Activated CD4-positive, alpha-beta T cell treated with anti-CD3 and anti-CD28 coated beads for 36 hours (primary cell): ENCODE measurements at regions of chr1 and their contacts with region 1.

Region 1: GRCh38 chr1:156583821-156584622 is 4.5 kb downstream of the TTC24 start:
- DNase-seq: peak; percentile 88
- ATAC-seq: peak; percentile 43
- H3K4me3 Mint-ChIP-seq: peak overlapping the region; percentile 74
- H3K27ac Mint-ChIP-seq: peak overlapping the region; percentile 51
- H3K4me1 Mint-ChIP-seq: peaks cover 27% of the 10 kb centered on the region
- H3K27me3 Mint-ChIP-seq: no peaks in the 10 kb centered on the region

Region 2: DNA sequence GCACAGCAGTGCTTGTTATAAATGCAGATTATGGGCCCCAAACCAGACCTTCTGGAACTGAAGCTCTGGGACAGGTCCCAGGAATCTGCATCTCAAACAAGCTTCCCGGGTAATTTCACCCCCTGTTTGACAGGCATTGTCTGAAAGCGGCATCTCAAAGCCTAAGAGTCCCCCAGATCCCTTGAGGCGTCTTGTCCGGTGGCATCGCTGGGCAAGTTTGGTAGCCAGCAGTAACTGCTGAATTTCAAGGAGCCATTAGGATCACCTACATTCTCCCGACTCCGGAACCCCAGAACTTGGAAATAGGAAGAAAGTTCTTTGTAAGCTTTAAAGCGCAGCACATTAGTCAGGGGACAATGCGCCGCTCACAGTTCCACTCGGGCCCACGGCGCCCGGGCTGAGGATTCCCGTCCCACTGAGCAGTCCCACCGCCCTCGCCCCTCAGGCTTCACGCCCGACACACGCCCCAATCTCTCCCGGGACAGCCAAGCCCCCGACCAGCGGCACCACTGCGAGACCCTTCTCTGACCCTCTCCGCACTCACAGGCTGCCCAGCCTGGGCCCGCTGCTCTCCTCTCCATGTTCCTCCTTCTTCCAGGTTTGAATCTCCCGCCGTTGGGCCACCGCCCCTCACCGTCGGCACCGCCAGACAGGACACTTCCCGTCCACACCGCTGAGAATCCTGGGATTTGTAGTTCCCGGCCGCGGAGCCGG is 11.9 kb before region 1 on chr1 and contains the start of gene IQGAP3:
- CTCF ChIA-PET with region 1: interaction called, 19 read pairs
- POLR2A ChIA-PET with region 1: no interaction called
- intact Hi-C with region 1: no loop called
- DNase-seq: peak; percentile 87
- ATAC-seq: peak; percentile 96
- H3K4me3 Mint-ChIP-seq: peak within 1 kb of the TSS; percentile 89
- H3K27ac Mint-ChIP-seq: peak within 1 kb of the TSS; percentile 73
- H3K4me1 Mint-ChIP-seq: peaks cover 22% of the 10 kb centered on the region
- H3K27me3 Mint-ChIP-seq: peaks cover 32% of the 10 kb centered on the region
- total RNA-seq, gene IQGAP3: 14.9 to 16.0 TPM

Region 3: GRCh38 chr1:156601122-156601830 is 17.3 kb after region 1 on chr1 and contains the start of gene GPATCH4:
- CTCF ChIA-PET with region 1: interaction called, 10 read pairs
- POLR2A ChIA-PET with region 1: no interaction called
- intact Hi-C with region 1: no loop called
- DNase-seq: peak; percentile 89
- ATAC-seq: peak; percentile 76
- H3K4me3 Mint-ChIP-seq: peak within 1 kb of the TSS; percentile 97
- H3K27ac Mint-ChIP-seq: peak within 1 kb of the TSS; percentile 99
- H3K4me1 Mint-ChIP-seq: peaks cover 45% of the 10 kb centered on the region
- H3K27me3 Mint-ChIP-seq: no peaks in the 10 kb centered on the region
- total RNA-seq, gene GPATCH4: 38.5 to 48.7 TPM

Region 4: DNA sequence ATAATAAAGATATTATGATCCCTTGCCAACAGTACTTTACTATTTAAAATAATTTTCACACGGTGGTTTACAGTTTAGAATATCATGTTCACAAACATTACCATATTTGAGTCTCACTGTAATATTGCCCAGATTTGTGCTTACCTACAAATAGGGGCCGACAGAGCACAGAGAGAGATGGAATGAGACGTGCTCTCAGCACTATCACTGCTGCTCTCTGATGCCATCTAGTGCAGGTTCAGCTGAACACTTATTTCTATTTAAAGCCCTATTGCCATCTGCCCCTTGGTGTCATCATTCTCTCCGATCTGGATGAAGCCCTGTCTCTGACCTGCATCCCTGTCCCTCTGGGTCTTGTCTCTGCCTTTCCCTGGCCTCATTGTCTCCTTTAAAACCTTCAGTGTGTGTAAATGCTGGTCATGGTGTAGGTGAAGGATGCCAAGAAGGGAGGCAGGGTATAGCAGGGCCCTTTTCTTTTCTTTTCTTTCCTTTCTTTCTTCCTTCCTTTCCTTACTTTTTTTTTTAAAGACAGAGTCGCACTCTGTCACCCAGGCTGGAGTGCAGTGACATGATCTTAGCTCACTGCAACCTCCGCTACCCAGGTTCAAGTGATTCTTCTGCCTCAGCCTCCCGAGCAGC is 24.1 kb after region 1 on chr1:
- CTCF ChIA-PET with region 1: interaction called, 17 read pairs
- POLR2A ChIA-PET with region 1: no interaction called
- intact Hi-C with region 1: loop called (anchors 1 kb)
- DNase-seq: peak; percentile 78
- ATAC-seq: peak; percentile 98
- H3K4me3 Mint-ChIP-seq: no peak overlapping the region
- H3K27ac Mint-ChIP-seq: no peak overlapping the region
- H3K4me1 Mint-ChIP-seq: peaks cover 8% of the 10 kb centered on the region
- H3K27me3 Mint-ChIP-seq: peaks cover 9% of the 10 kb centered on the region

Region 5: GRCh38 chr1:156616463-156616862 is 32.4 kb after region 1 on chr1:
- CTCF ChIA-PET with region 1: interaction called, 17 read pairs
- POLR2A ChIA-PET with region 1: no interaction called
- intact Hi-C with region 1: no loop called
- DNase-seq: no peak
- ATAC-seq: no peak
- H3K4me3 Mint-ChIP-seq: no peak overlapping the region
- H3K27ac Mint-ChIP-seq: no peak overlapping the region
- H3K4me1 Mint-ChIP-seq: no peaks in the 10 kb centered on the region
- H3K27me3 Mint-ChIP-seq: peaks cover 33% of the 10 kb centered on the region

Region 6: GRCh38 chr1:156667610-156667967 is 83.6 kb after region 1 on chr1:
- CTCF ChIA-PET with region 1: no interaction called
- POLR2A ChIA-PET with region 1: no interaction called
- intact Hi-C with region 1: no loop called
- DNase-seq: no peak
- ATAC-seq: no peak
- H3K4me3 Mint-ChIP-seq: no peak overlapping the region
- H3K27ac Mint-ChIP-seq: no peak overlapping the region
- H3K4me1 Mint-ChIP-seq: peaks cover 3% of the 10 kb centered on the region
- H3K27me3 Mint-ChIP-seq: peaks cover 9% of the 10 kb centered on the region

Region 7: GRCh38 chr1:156797212-156797871 is 213.3 kb after region 1 on chr1:
- CTCF ChIA-PET with region 1: no interaction called
- POLR2A ChIA-PET with region 1: no interaction called
- intact Hi-C with region 1: no loop called
- DNase-seq: peak; percentile 75
- ATAC-seq: peak; percentile 84
- H3K4me3 Mint-ChIP-seq: no peak overlapping the region
- H3K27ac Mint-ChIP-seq: no peak overlapping the region
- H3K4me1 Mint-ChIP-seq: peaks cover 7% of the 10 kb centered on the region
- H3K27me3 Mint-ChIP-seq: no peaks in the 10 kb centered on the region